Activated naive CD4-positive, alpha-beta T cell treated with anti-CD3 and anti-CD28 coated beads for 36 hours (primary cell): ENCODE measurements at regions of chrX and their contacts with region 1.

Region 1: GRCh38 chrX:56462389-56462788 is 101.0 kb upstream of the UBQLN2 start:
- DNase-seq: no peak
- H3K4me3 Mint-ChIP-seq: no peak overlapping the region
- H3K27ac Mint-ChIP-seq: no peak overlapping the region
- H3K4me1 Mint-ChIP-seq: peaks cover 24% of the 10 kb centered on the region
- H3K27me3 Mint-ChIP-seq: no peaks in the 10 kb centered on the region

Region 2: DNA sequence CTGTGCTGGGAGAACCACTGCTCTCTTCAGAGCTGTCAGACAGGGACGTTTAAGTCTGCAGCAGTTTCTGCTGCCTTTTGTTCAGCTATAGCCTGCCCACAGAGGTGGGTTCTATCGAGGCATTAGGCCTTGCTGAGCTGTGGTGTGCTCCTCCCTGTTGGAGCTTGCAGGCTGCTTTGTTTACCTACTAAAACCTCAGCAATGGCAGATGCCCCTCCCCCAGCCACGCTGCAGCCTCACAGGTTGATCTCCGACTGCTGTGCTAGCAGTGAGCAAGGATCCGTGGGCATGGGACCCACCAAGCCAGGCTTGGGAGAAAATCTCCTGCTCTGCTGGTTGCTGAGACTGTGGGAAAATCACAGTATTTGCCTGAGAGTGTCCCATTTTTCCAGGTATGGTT is 32.8 kb before region 1 on chrX:
- CTCF ChIA-PET with region 1: no interaction called
- intact Hi-C with region 1: loop called (anchors 5 kb)
- DNase-seq: no peak
- H3K4me3 Mint-ChIP-seq: no peak overlapping the region
- H3K27ac Mint-ChIP-seq: no peak overlapping the region
- H3K4me1 Mint-ChIP-seq: peaks cover 19% of the 10 kb centered on the region
- H3K27me3 Mint-ChIP-seq: no peaks in the 10 kb centered on the region